Colonic mucosa (tissue), 4 donors: ENCODE measurements at regions of chr2 and their contacts with region 1.

Region 1: DNA sequence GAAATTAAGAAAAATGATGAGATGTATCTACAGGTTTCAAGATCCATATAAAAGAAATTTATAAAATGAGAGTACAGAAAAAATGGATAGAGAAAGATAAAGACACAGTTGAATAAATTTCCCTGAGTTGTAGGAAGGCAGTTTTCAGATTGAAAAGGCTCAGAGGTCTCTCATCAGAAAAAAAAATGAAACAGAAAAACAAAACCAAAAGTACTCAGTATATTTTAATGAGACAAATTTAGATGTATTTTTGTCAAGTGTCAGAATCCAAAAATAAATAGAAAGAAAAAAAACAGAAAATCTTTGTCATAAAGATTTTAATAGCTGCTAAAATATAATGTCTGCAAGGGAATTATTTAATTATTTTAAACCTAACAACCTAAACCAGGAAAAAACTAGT is 520.5 kb downstream of the KCNJ3 start:
- DNase-seq: no peak
- H3K4me3 ChIP-seq: no peak overlapping the region
- H3K27ac ChIP-seq: no peak overlapping the region
- H3K4me1 ChIP-seq: no peaks in the 10 kb centered on the region
- H3K27me3 ChIP-seq: no peaks in the 10 kb centered on the region
- CTCF ChIP-seq: no peak

Region 2: DNA sequence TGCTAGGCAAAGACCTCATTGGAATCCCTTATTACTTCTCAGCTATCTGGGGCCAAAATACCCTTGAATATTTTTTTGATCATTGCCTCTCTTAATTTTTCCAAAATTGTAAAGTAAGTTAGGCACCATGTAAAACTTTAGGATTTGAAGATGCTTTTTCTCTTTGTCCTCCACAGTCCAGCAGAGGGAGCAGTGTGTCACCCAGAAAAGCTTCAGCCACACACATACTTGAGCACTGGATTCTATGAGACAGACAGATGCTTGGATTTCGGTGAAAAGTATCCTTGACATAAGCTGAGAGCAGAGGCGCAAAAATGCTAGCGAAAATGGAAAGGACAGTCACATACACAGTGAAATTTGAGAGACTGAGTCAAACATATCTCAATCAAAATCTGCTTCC is 595.1 kb before region 1 on chr2:
- intact Hi-C with region 1: loop called (anchors 10 kb)
- DNase-seq: peak; percentile 22
- H3K4me3 ChIP-seq: no peak overlapping the region
- H3K27ac ChIP-seq: no peak overlapping the region
- H3K4me1 ChIP-seq: no peaks in the 10 kb centered on the region
- H3K27me3 ChIP-seq: no peaks in the 10 kb centered on the region
- CTCF ChIP-seq: peak; percentile 41